Sigmoid colon (tissue), 7 donors: ENCODE measurements at regions of chr5 and their contacts with region 1.

Region 1: DNA sequence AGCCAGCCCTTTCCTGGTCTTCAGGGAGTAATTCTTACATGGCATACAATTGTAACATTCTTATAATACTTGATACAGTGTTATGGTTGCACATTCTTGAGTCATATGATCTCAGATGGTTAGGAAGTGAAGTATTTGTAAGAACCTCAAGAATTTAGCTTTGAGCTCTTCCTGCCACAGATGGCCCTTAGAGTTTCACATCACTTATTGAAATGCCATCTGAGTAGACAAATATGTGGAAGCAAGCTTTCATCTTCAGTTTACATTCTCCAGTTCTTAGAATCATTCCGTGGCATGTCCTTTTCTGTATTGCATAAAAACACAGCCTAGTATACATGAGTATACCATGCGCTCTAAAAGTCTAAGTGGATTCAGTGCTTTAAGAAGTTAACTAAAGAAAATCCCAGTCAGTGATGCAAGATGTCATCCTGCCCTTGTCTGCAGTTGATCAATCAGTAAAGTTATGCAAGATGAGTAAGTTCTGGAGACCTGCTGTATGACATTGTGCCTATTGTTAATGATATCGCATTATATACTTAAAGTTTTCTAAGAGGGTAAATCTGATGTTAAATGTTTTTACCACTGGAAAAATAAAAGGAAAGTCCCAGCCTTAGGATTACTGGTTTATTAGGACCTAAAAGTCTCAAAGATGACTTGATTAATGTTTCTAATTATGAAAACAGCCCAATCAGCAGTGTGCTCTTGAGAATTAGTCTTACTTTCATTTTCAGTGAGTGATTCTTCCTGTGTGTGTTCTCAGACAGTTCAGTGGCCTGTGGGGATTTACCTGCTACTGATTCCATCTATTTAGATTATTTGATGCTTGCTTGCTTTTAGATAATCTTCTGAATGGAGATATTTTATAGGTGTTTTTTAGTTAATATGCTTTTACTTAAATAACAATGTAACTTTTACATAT is 29.4 kb downstream of the RHOBTB3 start:
- DNase-seq: no peak
- H3K4me3 ChIP-seq: peak overlapping the region in 2 of 4 donors; percentile 14 to 27
- H3K27ac ChIP-seq: peak overlapping the region; percentile 38 to 72 (median 62)
- H3K4me1 ChIP-seq: peaks cover 0 to 40% (median 29%) of the 10 kb centered on the region in 4 donors
- H3K27me3 ChIP-seq: no peaks in the 10 kb centered on the region
- CTCF ChIP-seq: no peak
- EP300 ChIP-seq: no peak
- POLR2A ChIP-seq: no peak

Region 2: DNA sequence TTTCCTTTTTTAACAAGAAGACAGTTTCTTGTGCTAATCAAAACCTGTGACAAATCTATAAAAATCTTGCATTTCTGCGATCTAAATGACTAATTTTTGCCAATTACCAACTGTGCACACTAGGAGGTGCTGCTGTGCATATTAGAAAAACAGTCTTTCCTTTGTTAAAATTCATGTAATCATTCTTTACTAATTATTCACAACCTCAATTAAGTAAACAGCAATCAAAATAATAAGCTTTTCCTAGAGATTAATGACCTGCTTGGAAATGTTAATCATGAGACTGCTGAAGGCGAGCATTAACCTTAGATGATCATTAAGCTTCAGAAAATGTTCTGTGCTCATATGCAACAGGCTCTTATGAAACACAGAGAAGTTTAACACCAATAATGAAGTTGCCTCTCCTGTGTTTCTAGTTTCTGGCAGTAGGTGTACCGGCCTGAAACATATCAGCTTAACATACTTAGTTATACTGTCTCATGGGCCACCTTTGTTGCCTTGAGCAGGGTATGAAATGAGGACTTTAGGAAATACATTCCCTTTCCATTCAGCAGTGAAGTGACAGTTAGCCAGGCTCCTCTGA is 96.2 kb before region 1 on chr5:
- intact Hi-C with region 1: loop called (anchors 5 kb)
- DNase-seq: no peak
- H3K4me3 ChIP-seq: no peak overlapping the region
- H3K27ac ChIP-seq: peak overlapping the region; percentile 15 to 68 (median 49)
- H3K4me1 ChIP-seq: peaks cover 0 to 26% (median 14%) of the 10 kb centered on the region in 4 donors
- H3K27me3 ChIP-seq: no peaks in the 10 kb centered on the region
- CTCF ChIP-seq: peak; percentile 63 to 81 (median 74)
- EP300 ChIP-seq: no peak
- POLR2A ChIP-seq: no peak

Region 3: DNA sequence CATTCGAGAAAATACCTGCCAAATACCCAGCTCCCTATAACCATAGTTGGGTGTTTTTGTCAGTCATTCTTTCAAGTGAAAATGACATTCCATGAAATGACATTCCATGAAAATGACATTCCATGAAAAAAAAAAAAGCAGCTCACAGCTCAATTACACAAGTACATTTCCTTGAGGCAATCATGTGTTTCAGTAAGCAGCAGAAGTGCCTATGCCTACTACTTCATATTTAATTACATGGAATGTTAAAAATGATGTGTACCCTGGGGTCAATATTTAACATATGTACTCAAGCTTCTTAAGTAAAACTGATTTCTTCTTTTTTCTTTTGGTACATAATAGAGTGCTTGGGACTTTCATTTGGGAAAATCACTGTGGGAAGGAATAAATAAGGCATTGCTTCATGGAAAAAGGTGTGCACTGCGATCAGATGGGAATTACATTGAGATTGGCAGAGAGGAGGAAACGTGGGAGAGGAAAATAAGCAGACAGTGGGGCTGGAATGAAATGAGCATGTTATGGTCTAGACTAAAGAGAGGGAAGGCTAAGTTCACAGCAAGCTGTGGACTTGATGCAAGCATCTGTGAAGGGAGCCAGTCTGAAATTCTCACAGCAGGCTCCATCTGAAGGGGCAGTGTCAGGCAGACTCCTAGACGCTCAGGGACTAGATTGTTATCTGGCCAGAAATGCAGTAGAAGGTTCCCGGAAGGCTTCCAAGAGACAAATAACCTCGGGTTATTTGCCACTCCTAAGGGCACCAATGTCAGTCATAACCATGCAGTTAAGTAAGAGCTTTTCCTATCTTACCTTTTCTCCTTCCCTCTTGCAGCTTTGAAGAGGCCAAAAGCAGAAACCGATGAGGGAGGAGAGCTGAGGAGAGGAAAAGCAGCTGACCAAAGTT is 62.5 kb before region 1 on chr5:
- intact Hi-C with region 1: no loop called
- DNase-seq: no peak
- H3K4me3 ChIP-seq: no peak overlapping the region
- H3K27ac ChIP-seq: no peak overlapping the region
- H3K4me1 ChIP-seq: peaks cover 0 to 5% (median 0%) of the 10 kb centered on the region in 4 donors
- H3K27me3 ChIP-seq: no peaks in the 10 kb centered on the region
- CTCF ChIP-seq: no peak
- EP300 ChIP-seq: no peak
- POLR2A ChIP-seq: no peak